Right lobe of liver (tissue), 6 donors: ENCODE measurements at regions of chr10 and their contacts with region 1.

Region 1: DNA sequence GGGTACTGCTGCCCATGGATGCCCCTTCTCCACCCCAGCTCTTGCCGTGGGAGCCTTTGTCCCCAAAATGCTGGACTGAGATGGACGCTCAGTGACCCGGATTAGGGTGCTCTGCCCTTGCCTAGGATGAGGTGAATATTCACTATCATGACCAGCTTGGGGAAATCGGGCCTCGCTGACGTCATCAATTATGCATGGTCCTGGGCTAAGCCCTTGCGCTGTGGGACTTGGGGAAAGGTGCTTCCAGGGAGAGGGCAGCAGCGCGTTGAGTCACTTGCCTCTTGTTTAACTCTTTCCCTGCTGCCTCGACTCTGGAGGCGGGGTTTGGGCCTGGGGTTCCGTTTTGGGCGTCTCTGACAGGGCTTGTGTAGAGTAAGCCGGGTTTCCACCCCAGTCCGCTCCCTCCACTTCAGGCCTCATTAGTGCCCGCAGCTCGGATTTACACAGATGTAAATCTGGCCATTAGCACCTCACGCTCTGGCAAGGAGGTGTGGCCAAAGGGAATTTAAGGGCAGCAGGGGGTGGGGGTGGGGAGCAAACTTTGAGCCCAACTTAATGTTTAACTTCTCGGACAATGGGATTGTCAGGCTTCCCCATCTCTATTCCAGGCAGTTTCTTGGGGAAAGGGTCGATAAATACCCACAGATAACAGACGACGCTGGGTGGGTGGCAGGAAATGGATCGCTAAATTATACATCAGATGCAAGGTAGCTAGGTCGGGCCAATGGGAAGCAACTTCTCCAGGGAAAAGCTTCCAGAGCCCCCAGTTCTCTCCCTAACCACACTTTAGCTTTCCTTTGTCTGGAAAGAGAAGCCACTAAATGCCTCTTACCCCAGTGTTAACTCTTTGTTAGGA is 51.3 kb upstream of the TCF7L2 start:
- DNase-seq: peak; percentile 79 to 88 (median 81)
- ATAC-seq: peak; percentile 81 to 87 (median 84)
- H3K4me3 ChIP-seq: peak overlapping the region; percentile 16 to 57 (median 45)
- H3K27ac ChIP-seq: peak overlapping the region; percentile 65 to 93 (median 83)
- H3K4me1 ChIP-seq: peaks cover 0 to 15% (median 4%) of the 10 kb centered on the region in 4 donors
- H3K27me3 ChIP-seq: no peaks in the 10 kb centered on the region
- CTCF ChIP-seq: no peak
- POLR2A ChIP-seq: peak; percentile 81

Region 2: DNA sequence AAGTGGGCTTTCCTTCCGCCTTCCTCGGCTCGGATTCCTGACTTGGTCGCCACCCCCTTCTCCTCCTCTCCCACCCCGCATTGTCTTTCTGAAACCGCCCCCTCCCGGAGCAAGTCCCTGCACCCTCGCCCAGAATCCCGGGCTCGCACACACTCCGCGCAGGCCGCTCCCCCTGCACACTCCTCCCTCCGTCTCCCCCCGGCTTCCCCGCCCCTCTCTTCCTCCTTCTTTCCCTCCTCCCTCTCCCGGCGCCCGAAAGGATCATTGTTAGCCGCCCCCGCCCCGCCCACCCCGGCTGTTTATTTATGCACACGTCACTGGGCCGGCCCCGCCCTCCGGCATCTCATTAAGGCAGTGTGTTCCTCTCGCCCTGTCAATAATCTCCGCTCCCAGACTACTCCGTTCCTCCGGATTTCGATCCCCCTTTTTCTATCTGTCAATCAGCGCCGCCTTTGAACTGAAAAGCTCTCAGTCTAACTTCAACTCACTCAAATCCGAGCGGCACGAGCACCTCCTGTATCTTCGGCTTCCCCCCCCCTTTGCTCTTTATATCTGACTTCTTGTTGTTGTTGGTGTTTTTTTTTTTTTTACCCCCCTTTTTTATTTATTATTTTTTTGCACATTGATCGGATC is 51.2 kb after region 1 on chr10 and contains the start of gene TCF7L2:
- intact Hi-C with region 1: loop called in 1 of 2 experiments (anchors 10 kb)
- DNase-seq: peak; percentile 97 to 98 (median 98)
- ATAC-seq: peak; percentile 85 to 94 (median 88)
- H3K4me3 ChIP-seq: peak within 1 kb of the TSS; percentile 65 to 84 (median 74)
- H3K27ac ChIP-seq: peak within 1 kb of the TSS; percentile 94 to 99 (median 97)
- H3K4me1 ChIP-seq: peaks cover 0 to 23% (median 7%) of the 10 kb centered on the region in 4 donors
- H3K27me3 ChIP-seq: no peaks in the 10 kb centered on the region
- CTCF ChIP-seq: no peak
- POLR2A ChIP-seq: peak; percentile 80
- total RNA-seq, gene TCF7L2: 9.4 to 33.2 (median 16.7) TPM